ENCODE measurements at regions of chr17 and their contacts with region 1.

Region 1: GRCh38 chr17:78360371-78361224 is 721 bp upstream of the SOCS3 start:
- DNase-seq: peak; percentile 97
- H3K4me3 ChIP-seq: peak overlapping the region; percentile 70 to 94
- H3K27ac ChIP-seq: peak overlapping the region; percentile 91
- H3K4me1 ChIP-seq: peaks cover 18 to 43% of the 10 kb centered on the region in 2 experiments
- H3K27me3 ChIP-seq: no peaks in the 10 kb centered on the region
- CTCF ChIP-seq: peak; percentile 99
- EP300 ChIP-seq: peak in 1 of 2 experiments; percentile 6; a peak in 1 of 4 replicates
- RAD21 ChIP-seq: peak; percentile 81

Region 2: GRCh38 chr17:78313735-78314648 is 46.6 kb before region 1 on chr17:
- CTCF ChIA-PET with region 1: interaction called, 66 read pairs
- POLR2A ChIA-PET with region 1: interaction called, 7 read pairs
- DNase-seq: peak; percentile 95
- H3K4me3 ChIP-seq: peak overlapping the region; percentile 48 to 50
- H3K27ac ChIP-seq: peak overlapping the region; percentile 18 to 99; a peak in 3 of 4 replicates
- H3K4me1 ChIP-seq: peaks cover 21 to 32% of the 10 kb centered on the region in 2 experiments; a peak in 3 of 4 replicates
- H3K27me3 ChIP-seq: no peaks in the 10 kb centered on the region
- CTCF ChIP-seq: 0 out of 2 replicates have a peak, but pooled peaks have one; percentile 8
- EP300 ChIP-seq: no peak
- RAD21 ChIP-seq: no peak

Region 3: DNA sequence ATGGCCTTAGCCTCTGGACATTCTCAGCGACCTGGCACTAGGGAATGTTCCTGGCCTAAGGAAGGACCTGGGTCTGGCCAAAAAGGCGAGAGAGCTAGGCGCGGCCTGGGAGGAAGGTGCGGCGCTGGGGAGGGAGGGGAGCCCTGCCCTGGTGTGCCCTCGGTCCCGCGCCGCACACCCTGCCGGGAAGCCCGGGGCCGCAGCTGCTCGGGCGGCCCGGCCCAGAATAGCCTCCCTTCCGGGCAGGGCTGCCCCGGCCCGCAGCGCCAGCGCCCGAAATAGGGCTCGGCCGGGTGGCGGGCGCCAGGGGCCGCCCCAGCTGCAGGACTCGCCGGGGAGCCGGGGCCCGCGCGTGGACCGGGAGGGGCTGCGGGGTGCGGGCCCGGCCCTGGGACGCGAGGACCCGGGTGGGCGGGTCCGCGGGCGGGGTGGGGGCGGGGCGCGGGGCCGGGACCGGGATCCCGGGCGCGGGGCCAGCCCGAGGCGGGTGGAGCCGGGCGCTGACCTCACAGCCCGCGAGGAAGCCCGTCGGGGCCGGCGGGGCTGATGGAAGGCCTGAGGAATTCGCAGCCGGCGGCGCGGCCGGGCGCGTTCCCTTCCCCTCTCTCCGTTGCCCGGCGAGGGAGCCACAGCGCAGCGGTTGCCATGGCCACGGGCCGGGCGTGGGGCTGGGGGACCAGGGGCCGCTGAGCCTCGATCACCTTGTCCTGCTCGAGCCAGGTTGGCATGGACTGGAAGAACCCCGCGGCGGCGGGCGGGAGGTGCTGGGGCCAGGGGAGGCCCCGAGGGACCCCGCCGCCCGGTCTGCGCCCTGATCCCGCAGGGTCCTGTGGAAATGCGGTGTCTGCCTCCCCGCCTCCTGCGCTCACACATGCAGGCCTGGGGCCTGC is 18.8 kb before region 1 on chr17:
- CTCF ChIA-PET with region 1: interaction called, 22 read pairs
- POLR2A ChIA-PET with region 1: interaction called, 3 read pairs
- DNase-seq: peak; percentile 97
- H3K4me3 ChIP-seq: peak overlapping the region; percentile 31 to 36; a peak in 3 of 4 replicates
- H3K27ac ChIP-seq: peak overlapping the region; percentile 72 to 95
- H3K4me1 ChIP-seq: peaks cover 28 to 39% of the 10 kb centered on the region in 2 experiments; a peak in 3 of 4 replicates
- H3K27me3 ChIP-seq: no peaks in the 10 kb centered on the region
- CTCF ChIP-seq: no peak
- EP300 ChIP-seq: peak in 1 of 2 experiments; percentile 58; a peak in 1 of 4 replicates
- RAD21 ChIP-seq: no peak; the same call in 1 of the 2 replicates

Region 4: GRCh38 chr17:78390241-78391050 is 29.8 kb after region 1 on chr17:
- CTCF ChIA-PET with region 1: interaction called, 28 read pairs
- POLR2A ChIA-PET with region 1: no interaction called
- DNase-seq: peak; percentile 76
- H3K4me3 ChIP-seq: no peak overlapping the region
- H3K27ac ChIP-seq: peak overlapping the region; percentile 45 to 71; a peak in 3 of 4 replicates
- H3K4me1 ChIP-seq: peaks cover 10 to 30% of the 10 kb centered on the region in 2 experiments; a peak in 3 of 4 replicates
- H3K27me3 ChIP-seq: no peaks in the 10 kb centered on the region
- CTCF ChIP-seq: peak; percentile 41
- EP300 ChIP-seq: peak in 1 of 2 experiments; percentile 75; a peak in 1 of 4 replicates
- RAD21 ChIP-seq: no peak